Posterior cingulate gyrus (tissue), 11 donors: ENCODE measurements at regions of chr22 and their contacts with region 1.

Region 1: DNA sequence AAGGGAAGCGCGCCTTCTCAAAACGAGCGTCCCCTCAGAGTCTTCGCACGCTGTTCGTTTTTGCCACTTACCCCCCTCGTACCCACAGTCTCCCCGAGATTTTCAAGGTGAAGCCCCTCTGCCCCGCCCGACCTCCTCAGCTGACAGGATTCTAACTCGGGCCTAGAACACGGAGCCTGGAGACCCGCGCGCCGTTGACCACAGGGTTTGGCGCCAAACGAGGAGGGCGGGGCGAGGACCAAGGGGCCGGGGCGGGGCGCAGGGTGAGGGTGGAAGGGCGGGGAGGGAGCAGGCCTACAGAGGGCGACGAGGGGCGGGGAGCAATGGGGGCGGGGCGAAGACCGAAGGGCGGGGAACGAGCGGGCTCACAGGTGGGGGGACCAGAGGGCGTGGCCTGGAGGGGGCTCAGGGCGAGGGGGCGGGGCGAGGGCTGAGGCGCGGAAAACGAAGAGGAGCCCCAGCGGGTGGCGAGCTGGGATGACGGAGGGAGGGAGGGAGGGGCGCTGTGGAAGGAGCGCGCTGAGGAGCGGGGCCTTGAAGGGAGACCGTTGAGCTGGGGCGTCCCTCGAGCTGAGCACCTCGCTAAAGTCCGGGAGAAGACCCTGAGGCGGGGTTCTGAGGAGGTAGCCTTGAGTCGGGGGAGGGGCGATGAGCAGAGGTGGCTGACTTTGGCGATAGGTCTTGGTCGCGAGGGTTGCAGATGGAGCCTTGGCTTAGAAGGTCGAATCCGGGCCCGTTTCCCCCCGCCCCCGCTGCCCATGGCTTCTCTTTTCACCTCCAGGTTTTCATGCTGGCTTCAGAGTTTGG is at the start of gene DMC1:
- DNase-seq: peak; percentile 59 to 95 (median 80)

Region 2: DNA sequence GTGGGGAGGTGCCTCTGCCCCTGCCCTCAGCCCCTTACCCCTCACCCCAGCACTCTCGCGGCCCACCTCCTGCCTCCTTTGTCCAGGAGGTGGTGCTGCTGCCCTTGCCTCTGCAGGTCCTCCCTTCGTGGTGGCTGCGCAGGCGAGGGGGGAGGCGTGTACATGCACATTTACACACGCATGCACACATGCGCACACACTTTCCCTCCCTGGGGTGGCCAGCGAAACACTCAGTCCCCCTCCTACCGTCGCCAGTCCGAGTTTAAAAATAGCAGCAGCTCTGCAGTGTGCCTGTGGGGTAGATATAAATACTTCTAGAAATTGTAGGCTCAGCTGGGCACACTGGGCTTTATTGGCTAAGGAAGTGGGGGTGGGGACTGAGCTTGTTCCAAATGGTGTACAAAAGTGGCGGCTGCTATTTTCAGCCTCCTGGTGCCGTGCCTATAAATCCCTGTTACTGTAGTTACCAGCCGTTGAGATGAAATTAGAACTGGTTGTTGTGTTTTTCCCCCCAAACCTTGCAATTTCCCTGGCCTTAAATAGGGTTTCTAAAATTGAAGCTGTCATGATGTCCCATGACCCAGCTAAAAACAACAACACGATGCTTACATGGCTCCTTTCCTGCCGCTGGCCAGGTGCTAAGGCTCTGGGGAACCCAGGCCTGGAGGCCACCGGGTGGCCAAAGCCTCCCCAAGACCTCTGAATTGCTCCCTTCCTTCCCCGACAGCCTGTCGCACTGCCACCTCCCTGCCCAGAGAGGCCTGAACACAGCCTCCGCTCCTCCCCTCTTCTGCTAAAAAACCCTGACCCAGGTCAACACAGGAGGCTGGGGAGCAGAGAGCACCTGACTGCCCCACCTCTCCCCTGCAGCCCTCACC is 500.6 kb before region 1 on chr22:
- intact Hi-C with region 1: loop called (anchors 5 kb)
- DNase-seq: peak; percentile 66 to 98 (median 85)

Region 3: GRCh38 chr22:38412435-38413084 is 157.6 kb before region 1 on chr22:
- intact Hi-C with region 1: loop called (anchors 2 kb)
- DNase-seq: peak in 4 of 10 donors; percentile 43 to 88 (median 73)

Region 4: DNA sequence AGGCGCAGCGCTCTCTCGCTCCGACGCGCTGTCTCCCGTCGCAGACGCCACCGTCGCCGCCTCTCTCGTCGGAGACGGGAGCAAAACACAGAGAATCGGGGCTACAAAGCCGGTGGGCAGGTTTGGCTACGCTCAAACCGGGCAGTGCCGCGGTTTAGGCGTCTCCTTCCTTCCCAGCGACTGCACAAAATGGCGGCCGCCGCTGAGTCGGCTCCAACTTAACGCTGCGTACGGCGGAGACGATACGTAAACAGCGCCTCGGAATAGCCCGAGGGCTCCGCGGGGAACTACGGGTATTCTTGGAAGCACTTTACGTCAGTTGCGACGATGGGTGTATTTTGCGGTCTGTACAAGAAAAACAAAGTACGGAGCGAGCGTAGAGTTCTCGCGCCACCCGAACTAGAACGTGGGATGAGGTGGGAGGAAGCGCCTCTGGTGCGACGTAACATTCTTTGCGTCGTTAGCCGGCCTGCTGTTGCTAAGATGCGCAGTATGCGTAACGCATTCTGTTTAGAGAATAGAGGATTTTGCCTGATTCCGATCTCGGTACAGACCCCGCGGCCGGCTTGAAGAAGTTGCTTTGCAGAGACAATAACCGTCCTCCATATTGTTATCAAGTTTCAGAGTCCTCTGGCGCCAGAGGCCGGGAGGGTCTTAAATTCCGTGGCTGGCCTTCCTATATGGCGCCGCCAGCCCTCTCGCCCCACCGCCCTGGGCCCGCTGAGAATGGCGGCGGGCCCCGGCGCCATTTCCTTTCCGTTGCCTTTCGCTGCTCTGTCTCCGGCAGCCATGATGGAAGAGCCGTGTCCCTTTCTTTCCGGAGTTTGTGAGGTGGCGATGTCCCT is 63.8 kb before region 1 on chr22 and contains the start of gene DDX17:
- intact Hi-C with region 1: loop called (anchors 5 kb)
- DNase-seq: peak; percentile 90 to 99 (median 92)